GM18951 (cell line): ENCODE measurements at regions of chr6 and their contacts with region 1.

Region 1: GRCh38 chr6:147506704-147507114 is 1.8 kb upstream of the SAMD5 start:
- POLR2A ChIP-seq: no peak

Region 2: GRCh38 chr6:147941143-147941542 is 434.4 kb after region 1 on chr6:
- in situ Hi-C with region 1: no loop called
- POLR2A ChIP-seq: no peak

Region 3: DNA sequence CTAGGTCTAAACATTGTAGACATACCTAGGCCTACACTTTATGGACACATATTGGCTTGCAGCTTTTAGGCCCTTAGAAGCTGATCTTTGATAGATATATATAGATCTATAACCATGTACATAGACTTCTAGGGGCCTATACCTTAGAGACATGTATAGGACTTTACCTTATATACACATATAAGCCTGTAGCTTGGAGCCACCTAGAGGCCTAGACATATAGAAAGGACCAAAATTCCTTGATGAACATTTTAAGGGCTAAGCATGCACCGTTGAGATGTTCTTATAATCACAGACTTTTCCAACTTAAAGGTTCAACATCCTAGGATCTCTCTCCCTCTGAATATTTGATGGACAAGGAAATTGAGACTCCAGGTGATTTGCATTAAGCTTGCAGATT is 464.3 kb after region 1 on chr6:
- in situ Hi-C with region 1: loop called (anchors 25 kb)
- POLR2A ChIP-seq: no peak

Region 4: DNA sequence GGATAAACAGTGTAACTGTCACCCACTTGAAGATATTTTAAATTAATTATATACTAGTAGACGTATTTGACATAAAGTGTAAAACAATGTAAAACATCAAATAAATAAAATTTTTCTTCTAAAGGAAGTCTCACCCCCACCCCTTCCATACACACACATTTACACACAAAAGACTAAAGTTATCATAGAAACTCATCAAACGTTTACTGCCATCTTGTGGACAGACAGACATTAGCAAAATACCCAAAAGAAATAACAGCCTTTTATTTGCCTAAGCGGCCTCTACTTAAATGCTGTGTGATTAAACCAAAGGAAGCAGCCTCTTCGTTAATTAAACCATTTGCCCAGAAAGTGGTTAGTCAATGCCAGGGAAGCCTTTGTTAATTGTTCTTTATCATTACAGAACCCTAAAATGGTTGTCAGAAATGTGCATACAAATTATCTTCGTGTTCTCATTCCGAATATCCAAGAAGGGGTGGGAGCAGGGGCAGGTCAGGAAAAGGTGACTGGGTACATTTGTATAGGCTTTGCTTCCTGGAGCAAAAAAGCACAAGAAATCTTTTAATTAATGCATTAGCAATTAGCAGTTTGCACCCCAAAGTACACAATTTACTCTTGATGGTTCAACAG is 659.7 kb after region 1 on chr6:
- in situ Hi-C with region 1: loop called (anchors 10 kb)
- POLR2A ChIP-seq: no peak